ENCODE measurements at regions of chr15 and their contacts with region 1.

Region 1: DNA sequence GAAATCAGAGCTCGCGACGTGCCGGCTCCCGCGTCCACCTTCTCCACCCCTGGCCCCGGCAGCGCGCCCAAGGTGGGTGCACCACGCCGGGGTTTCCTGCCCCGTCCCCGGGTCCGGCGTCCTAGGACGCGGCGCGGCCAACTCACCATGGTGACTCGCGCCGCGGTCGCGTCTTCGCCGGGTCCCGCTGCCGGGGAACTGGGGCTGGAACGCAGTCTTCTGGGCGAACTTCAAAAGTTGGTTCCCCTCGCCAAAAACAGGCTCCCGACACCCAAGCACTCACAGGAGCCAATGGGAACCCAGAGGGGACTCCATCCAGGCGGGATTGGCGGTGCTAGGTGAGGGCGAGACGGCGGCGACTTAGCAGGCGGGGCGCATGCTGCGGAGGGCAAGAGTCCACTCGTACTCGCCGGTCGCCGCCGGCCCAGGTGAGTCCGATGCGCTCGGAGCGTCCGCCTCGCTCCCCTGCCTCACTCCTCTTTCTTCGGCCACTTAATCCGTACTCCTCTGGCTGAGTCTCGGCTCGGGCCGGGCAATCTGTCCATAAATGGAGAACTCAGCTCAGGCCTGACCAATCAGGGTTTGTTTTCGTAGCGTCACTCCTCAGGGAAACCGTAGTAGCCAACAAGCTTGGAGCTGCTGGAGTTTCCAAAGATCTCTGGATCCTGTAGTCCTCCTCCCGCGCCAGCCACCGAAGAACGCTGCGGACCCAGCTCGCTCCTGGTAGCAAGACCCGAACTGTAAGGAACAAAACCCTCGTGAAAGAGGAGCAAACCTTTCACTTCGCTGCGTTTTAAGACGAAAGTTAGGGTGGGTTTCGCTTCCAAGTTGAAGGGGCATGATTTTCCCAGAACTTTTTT is at the start of gene MYO1E:
- DNase-seq: peak; percentile 73
- ATAC-seq: peak; percentile 62
- H3K4me3 ChIP-seq: peak within 1 kb of the TSS; percentile 63 to 98 (median 85)
- H3K4me3 Mint-ChIP-seq: peak within 1 kb of the TSS; percentile 99
- H3K27ac ChIP-seq: peak within 1 kb of the TSS; percentile 72 to 77
- H3K27ac Mint-ChIP-seq: peak within 1 kb of the TSS; percentile 94
- H3K4me1 ChIP-seq: peaks cover 35 to 37% of the 10 kb centered on the region in 2 donors
- H3K4me1 Mint-ChIP-seq: peaks cover 53% of the 10 kb centered on the region
- H3K27me3 ChIP-seq: no peaks in the 10 kb centered on the region
- H3K27me3 Mint-ChIP-seq: no peaks in the 10 kb centered on the region
- CTCF ChIP-seq: no peak
- total RNA-seq, gene MYO1E: 100.0 and 111 TPM in 2 replicates

Region 2: DNA sequence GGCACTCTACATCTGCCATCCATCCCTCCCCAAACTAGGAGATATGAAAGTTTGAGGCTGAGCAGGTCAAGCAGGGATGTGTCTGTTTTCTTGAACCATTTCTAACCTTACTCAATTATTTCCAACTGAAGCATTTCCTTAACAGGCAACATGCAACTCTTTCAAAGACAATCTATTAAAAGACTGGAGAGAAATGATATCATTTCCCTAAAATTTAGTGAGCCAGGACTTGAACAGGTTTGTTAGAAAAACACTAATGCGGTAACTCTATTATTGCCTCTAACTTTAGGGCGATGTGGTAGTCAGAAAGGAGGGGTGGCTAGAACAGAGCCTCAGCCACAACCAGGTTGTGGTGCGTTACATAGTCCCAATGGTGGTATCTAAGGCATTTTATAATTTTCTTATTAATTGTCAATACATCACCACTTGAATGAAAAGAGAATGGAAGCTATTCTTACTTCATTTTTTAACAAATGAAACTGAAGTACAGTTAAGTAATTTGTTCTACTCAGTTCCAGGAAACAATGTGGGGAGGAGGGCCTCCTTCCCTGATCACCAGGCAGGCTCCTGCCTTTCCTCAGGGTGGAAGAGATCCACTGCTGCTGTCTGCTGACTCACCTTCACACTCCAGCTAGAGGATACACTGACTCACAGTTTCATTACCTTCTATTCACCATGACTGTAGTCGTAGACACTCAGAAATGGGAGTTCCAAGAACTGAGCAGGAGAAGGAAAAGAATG is 22.7 kb before region 1 on chr15:
- CTCF ChIA-PET with region 1: no interaction called
- POLR2A ChIA-PET with region 1: interaction called, 3 read pairs
- intact Hi-C with region 1: loop called (anchors 2 kb)
- DNase-seq: no peak
- ATAC-seq: no peak
- H3K4me3 ChIP-seq: no peak overlapping the region
- H3K4me3 Mint-ChIP-seq: no peak overlapping the region
- H3K27ac ChIP-seq: peak overlapping the region in 1 of 2 donors; percentile 49
- H3K27ac Mint-ChIP-seq: peak overlapping the region; percentile 43
- H3K4me1 ChIP-seq: peaks cover 65 to 69% of the 10 kb centered on the region in 2 donors
- H3K4me1 Mint-ChIP-seq: peaks cover 77% of the 10 kb centered on the region
- H3K27me3 ChIP-seq: no peaks in the 10 kb centered on the region
- H3K27me3 Mint-ChIP-seq: no peaks in the 10 kb centered on the region
- CTCF ChIP-seq: no peak

Region 3: GRCh38 chr15:59399465-59400102 is 27.0 kb after region 1 on chr15:
- CTCF ChIA-PET with region 1: interaction called, 3 read pairs
- POLR2A ChIA-PET with region 1: no interaction called
- intact Hi-C with region 1: loop called (anchors 2 kb)
- DNase-seq: peak; percentile 89
- ATAC-seq: peak; percentile 95
- H3K4me3 ChIP-seq: peak overlapping the region; percentile 21 to 48 (median 35)
- H3K4me3 Mint-ChIP-seq: peak overlapping the region; percentile 80
- H3K27ac ChIP-seq: peak overlapping the region; percentile 70 to 89
- H3K27ac Mint-ChIP-seq: peak overlapping the region; percentile 93
- H3K4me1 ChIP-seq: peaks cover 73 to 81% of the 10 kb centered on the region in 2 donors
- H3K4me1 Mint-ChIP-seq: peaks cover 78% of the 10 kb centered on the region
- H3K27me3 ChIP-seq: no peaks in the 10 kb centered on the region
- H3K27me3 Mint-ChIP-seq: no peaks in the 10 kb centered on the region
- CTCF ChIP-seq: no peak